MCF 10A (cell line): ENCODE measurements at regions of chr9 and their contacts with region 1.

Region 1: GRCh38 chr9:126500684-126501382 is 112.9 kb upstream of the LMX1B start:
- DNase-seq: peak; percentile 70
- H3K4me3 Mint-ChIP-seq: no peak overlapping the region
- H3K27ac Mint-ChIP-seq: no peak overlapping the region
- H3K4me1 Mint-ChIP-seq: no peaks in the 10 kb centered on the region
- H3K27me3 Mint-ChIP-seq: no peaks in the 10 kb centered on the region
- CTCF ChIP-seq: peak; percentile 98

Region 2: GRCh38 chr9:126164796-126165525 is 335.9 kb before region 1 on chr9:
- CTCF ChIA-PET with region 1: no interaction called
- POLR2A ChIA-PET with region 1: no interaction called
- intact Hi-C with region 1: no loop called
- DNase-seq: no peak
- H3K4me3 Mint-ChIP-seq: no peak overlapping the region
- H3K27ac Mint-ChIP-seq: no peak overlapping the region
- H3K4me1 Mint-ChIP-seq: no peaks in the 10 kb centered on the region
- H3K27me3 Mint-ChIP-seq: peaks cover 58% of the 10 kb centered on the region
- CTCF ChIP-seq: no peak

Region 3: DNA sequence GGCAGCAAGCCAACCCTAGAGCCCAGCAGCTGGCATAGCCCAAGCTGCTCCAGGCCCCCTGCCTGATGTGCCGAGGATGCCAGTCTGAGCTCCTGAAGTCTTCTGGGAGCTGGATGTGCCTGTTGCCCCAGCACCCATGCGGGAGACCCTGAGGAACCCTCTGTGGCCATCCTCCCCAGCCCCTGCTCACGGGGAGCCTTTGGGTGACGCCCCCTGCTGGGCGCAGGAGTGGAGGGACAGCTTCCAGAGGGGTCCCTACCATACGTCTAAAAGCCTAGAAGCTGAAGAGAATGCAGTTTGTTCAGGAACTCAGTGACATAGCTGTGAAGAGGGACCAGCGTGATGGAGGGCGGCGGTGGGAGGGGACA is 207.3 kb before region 1 on chr9:
- CTCF ChIA-PET with region 1: no interaction called
- POLR2A ChIA-PET with region 1: no interaction called
- intact Hi-C with region 1: no loop called
- DNase-seq: no peak
- H3K4me3 Mint-ChIP-seq: no peak overlapping the region
- H3K27ac Mint-ChIP-seq: no peak overlapping the region
- H3K4me1 Mint-ChIP-seq: no peaks in the 10 kb centered on the region
- H3K27me3 Mint-ChIP-seq: peaks cover 4% of the 10 kb centered on the region
- CTCF ChIP-seq: peak; percentile 2

Region 4: GRCh38 chr9:126523611-126524111 is 22.8 kb after region 1 on chr9:
- CTCF ChIA-PET with region 1: interaction called, 10 read pairs
- POLR2A ChIA-PET with region 1: interaction called, 3 read pairs
- intact Hi-C with region 1: no loop called
- DNase-seq: no peak
- H3K4me3 Mint-ChIP-seq: no peak overlapping the region
- H3K27ac Mint-ChIP-seq: no peak overlapping the region
- H3K4me1 Mint-ChIP-seq: no peaks in the 10 kb centered on the region
- H3K27me3 Mint-ChIP-seq: peaks cover 21% of the 10 kb centered on the region
- CTCF ChIP-seq: no peak

Region 5: DNA sequence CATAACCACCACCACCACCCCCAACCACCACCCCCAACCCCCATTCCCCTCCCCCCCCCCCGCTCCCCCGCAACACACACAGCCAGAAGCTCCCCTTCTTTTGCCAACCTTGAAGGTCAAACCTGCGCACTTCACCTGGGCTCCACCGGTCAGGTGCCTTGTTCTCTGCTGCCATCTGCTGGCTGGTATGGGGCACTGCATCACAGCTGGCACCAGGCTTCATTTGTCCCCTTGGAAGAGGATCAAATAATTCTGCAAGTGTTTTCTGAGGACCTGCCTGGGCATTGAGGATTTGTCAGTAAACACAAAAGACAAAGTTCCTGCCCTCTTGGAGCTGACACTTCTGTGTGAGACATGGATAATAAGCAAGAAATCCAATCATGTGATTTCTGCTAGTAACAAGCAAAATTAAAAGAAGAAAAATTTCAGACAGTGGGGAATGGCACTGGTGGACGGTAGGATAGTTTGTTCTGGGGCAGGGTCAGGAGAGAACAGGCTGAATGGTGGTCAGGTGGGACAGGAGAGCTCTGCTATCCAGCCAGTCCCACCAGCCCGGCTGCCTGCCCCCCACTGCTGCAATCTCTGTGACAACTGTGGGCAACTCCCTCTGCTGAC is 57.3 kb after region 1 on chr9:
- CTCF ChIA-PET with region 1: interaction called, 217 read pairs
- POLR2A ChIA-PET with region 1: interaction called, 4 read pairs
- intact Hi-C with region 1: loop called (anchors 1 kb)
- DNase-seq: peak; percentile 74
- H3K4me3 Mint-ChIP-seq: no peak overlapping the region
- H3K27ac Mint-ChIP-seq: no peak overlapping the region
- H3K4me1 Mint-ChIP-seq: no peaks in the 10 kb centered on the region
- H3K27me3 Mint-ChIP-seq: peaks cover 34% of the 10 kb centered on the region
- CTCF ChIP-seq: peak; percentile 98

Region 6: GRCh38 chr9:126581893-126582292 is 81.1 kb after region 1 on chr9:
- CTCF ChIA-PET with region 1: interaction called, 11 read pairs
- POLR2A ChIA-PET with region 1: no interaction called
- intact Hi-C with region 1: no loop called
- DNase-seq: no peak
- H3K4me3 Mint-ChIP-seq: no peak overlapping the region
- H3K27ac Mint-ChIP-seq: no peak overlapping the region
- H3K4me1 Mint-ChIP-seq: no peaks in the 10 kb centered on the region
- H3K27me3 Mint-ChIP-seq: peaks cover 39% of the 10 kb centered on the region
- CTCF ChIP-seq: no peak

Region 7: DNA sequence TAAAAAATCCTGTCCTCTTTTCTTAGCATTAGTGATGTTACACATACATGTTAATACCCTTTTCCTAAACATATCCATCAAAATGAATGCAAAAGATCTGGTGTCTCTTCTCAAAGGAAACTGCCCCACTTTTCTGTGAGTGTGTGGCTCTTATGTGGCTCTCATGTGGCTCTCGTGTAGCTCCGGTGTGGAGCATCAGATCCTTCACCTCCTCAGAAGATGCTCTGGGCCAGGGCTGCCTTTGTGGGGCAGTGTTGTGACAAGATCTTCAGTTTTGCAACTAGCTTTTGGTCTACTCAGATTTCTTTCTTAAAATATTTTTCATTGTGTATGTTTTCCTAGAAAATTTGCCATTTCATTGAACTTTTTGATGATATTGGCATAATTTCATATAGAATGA is 783.1 kb after region 1 on chr9:
- CTCF ChIA-PET with region 1: no interaction called
- POLR2A ChIA-PET with region 1: no interaction called
- intact Hi-C with region 1: no loop called
- DNase-seq: peak; percentile 49
- H3K4me3 Mint-ChIP-seq: no peak overlapping the region
- H3K27ac Mint-ChIP-seq: no peak overlapping the region
- H3K4me1 Mint-ChIP-seq: peaks cover 7% of the 10 kb centered on the region
- H3K27me3 Mint-ChIP-seq: no peaks in the 10 kb centered on the region
- CTCF ChIP-seq: peak; percentile 33